ENCODE measurements at regions of chr2 and their contacts with region 1.

Region 1: DNA sequence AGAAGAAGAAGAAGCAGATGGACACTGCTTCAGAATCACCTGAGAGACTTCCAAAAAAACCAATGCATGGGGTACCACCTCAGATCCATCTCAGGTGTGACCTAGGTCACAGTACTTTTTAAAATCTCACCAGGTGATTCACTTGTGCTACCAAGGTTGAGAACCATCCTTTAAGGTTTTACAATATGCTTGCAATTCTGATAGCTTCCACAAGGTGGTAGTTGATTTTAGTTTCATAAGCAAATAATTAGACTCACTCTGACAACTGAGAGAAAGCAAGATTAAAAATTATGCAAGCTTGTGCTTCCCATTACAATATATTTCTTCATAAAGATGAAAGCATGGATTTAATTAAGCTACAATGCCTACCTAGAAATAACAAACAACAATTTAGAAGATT is 355.1 kb downstream of the EN1 start:
- DNase-seq: peak; percentile 37
- ATAC-seq: no peak
- H3K4me3 ChIP-seq: no peak overlapping the region
- H3K27ac ChIP-seq: no peak overlapping the region
- H3K4me1 ChIP-seq: no peaks in the 10 kb centered on the region
- H3K27me3 ChIP-seq: no peaks in the 10 kb centered on the region
- CTCF ChIP-seq: peak; percentile 49
- POLR2A ChIP-seq: no peak
- RAD21 ChIP-seq: peak; percentile 40

Region 2: DNA sequence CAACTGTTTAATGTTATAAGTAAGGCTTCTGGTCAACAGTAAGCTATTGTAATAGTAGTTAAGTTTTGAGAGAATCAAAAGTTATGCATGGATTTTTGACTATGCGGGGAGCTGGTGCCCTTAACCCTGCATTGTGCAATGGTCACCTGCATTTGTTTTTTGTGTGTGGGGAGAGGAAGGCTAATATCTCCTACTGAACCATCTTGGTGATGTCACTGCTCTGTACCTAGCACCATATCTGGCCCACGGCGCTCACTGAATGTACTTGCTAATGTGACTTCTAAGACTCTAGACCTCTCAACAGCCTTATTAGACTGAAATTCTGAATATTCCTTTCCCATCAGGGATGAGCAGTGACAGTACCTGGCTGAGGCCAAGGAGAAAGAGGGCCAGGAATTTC is 419.0 kb before region 1 on chr2:
- CTCF ChIA-PET with region 1: no interaction called
- POLR2A ChIA-PET with region 1: no interaction called
- dilution Hi-C with region 1: no loop called
- in situ Hi-C with region 1: no loop called
- intact Hi-C with region 1: loop called (anchors 5 kb)
- DNase-seq: no peak
- ATAC-seq: no peak
- H3K4me3 ChIP-seq: no peak overlapping the region
- H3K27ac ChIP-seq: no peak overlapping the region
- H3K4me1 ChIP-seq: no peaks in the 10 kb centered on the region; the same call in 1 of the 2 replicates
- H3K27me3 ChIP-seq: peaks cover 21% of the 10 kb centered on the region
- CTCF ChIP-seq: no peak
- POLR2A ChIP-seq: no peak
- RAD21 ChIP-seq: no peak